Ovary (tissue), 10 donors: ENCODE measurements at regions of chr1 and their contacts with region 1.

Region 1: DNA sequence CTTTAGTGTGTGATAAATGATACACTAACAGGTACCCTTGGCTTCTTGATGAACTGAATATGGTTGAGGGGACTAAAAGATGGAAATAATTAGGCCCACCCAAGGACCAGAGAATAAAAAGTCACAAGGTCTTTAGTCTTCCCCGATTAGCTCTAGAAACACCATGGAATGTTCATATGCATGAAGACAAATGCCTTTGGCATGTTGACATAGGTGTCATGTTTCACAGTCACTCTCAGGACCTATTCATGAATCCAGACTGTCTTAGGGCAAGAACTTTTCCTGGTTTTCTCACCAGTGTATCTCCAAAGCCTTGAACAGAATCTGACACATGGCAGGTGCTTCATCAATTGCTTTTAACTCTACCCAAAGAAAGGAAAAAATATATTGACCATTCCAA is 412.8 kb downstream of the AJAP1 start:
- DNase-seq: no peak
- H3K4me3 ChIP-seq: no peak overlapping the region
- H3K27ac ChIP-seq: no peak overlapping the region
- H3K4me1 ChIP-seq: no peaks in the 10 kb centered on the region
- H3K27me3 ChIP-seq: no peaks in the 10 kb centered on the region
- CTCF ChIP-seq: no peak
- EP300 ChIP-seq: no peak
- POLR2A ChIP-seq: no peak

Region 2: GRCh38 chr1:5151511-5151910 is 84.3 kb after region 1 on chr1:
- intact Hi-C with region 1: loop called in 1 of 4 experiments (anchors 10 kb)
- DNase-seq: no peak
- H3K4me3 ChIP-seq: no peak overlapping the region
- H3K27ac ChIP-seq: no peak overlapping the region
- H3K4me1 ChIP-seq: no peaks in the 10 kb centered on the region
- H3K27me3 ChIP-seq: no peaks in the 10 kb centered on the region
- CTCF ChIP-seq: no peak
- EP300 ChIP-seq: no peak
- POLR2A ChIP-seq: no peak